BJ (cell line): ENCODE measurements at regions of chr16 and their contacts with region 1.

Region 1: GRCh38 chr16:3938848-3939624 is 58.5 kb upstream of the CREBBP start:
- DNase-seq: peak; percentile 67
- H3K4me3 ChIP-seq: peak overlapping the region; percentile 35
- H3K27me3 ChIP-seq: no peaks in the 10 kb centered on the region
- CTCF ChIP-seq: peak; percentile 97

Region 2: DNA sequence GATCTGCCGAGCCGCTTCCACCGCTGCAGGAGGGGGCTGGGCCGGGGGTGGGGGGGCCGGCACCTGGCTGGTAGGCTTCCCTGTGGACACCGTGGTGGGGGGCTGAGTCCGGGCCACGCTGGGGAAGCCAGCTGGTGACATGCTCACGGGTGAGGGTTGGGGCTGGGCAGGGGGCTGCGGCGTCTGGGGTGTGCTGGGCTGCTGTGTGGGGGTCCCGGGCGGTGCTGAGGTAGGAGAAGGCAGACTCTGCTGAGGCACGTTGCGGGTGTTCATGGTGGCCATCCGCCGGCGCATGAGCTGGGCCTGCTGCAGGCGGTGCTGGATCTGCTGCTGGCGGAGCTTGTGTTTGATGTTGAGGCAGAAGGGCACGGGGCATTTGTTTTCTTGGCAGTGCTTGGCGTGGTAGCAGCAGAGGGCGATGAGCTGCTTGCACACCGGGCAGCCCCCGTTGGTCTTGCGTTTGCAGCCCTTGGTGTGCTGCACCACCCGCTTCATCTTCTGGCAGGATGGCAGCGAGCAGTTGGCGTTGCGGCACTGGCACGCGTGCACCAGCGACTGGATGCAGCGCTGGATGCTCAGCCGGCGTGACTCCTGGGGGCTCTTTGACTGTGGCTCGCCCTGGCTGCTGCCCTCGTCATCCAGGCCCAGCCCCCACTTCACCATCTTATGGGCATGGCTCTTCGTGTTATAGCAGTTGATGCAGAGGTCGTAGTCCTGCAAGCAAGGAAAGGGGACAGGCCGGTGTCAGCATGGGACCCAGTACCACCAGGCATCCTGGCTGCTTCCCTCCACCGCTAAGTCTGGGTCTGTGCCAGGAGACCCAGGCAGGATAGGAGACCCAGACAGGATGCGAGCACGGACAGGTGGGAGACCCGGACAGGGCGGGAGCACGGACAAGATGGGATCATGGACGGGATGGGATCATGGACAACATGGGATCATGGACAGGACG is 209.6 kb before region 1 on chr16:
- CTCF ChIA-PET with region 1: interaction called, 4 read pairs
- POLR2A ChIA-PET with region 1: interaction called, 10 read pairs
- DNase-seq: no peak
- H3K4me3 ChIP-seq: no peak overlapping the region
- H3K27me3 ChIP-seq: no peaks in the 10 kb centered on the region
- CTCF ChIP-seq: no peak

Region 3: DNA sequence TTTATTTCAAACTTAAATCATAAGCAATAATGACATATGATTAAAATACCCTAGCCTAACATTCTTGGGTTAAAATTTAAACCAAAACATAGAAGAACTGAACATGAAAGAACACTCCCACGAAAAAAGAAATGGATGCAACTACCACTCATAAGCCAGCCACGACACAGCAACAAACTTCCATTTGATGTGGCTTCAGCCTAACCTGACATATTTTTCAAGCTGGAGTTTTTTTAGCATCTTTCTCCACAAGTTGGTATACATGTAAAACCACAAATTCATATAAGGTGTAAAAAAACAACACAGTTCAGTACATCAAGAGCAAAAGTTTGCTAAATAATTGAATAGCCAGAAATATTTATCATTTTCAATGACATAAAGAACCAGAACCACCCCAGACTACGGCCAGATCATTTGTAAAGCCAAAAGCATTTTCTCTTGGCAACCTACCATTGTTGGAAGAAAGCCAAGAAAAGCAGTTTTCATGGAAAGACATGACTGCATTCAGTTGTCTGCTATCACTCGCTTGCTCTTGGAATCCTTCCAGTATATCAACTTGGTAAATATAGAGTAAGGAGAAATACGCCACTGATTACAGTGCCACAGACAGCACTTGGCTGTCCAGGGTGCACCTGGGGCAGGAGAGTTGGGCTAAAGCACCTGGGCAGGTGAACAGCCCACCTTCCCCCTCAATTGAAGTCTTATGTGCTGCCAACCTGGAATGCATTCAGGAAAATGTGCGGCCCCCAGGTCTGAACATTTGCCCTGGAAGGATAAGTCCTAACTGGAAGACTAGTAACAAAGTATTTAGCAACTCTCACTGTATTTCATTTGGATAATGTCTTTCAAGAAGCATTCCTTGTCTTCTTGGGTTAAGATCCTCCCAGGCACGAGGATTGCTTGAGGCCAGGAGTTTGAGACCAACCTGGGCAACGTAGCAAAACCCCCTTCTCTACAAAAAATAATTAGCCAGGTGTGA is 119.0 kb before region 1 on chr16:
- CTCF ChIA-PET with region 1: no interaction called
- POLR2A ChIA-PET with region 1: no interaction called
- DNase-seq: peak; percentile 52
- H3K4me3 ChIP-seq: no peak overlapping the region
- H3K27me3 ChIP-seq: no peaks in the 10 kb centered on the region
- CTCF ChIP-seq: no peak

Region 4: DNA sequence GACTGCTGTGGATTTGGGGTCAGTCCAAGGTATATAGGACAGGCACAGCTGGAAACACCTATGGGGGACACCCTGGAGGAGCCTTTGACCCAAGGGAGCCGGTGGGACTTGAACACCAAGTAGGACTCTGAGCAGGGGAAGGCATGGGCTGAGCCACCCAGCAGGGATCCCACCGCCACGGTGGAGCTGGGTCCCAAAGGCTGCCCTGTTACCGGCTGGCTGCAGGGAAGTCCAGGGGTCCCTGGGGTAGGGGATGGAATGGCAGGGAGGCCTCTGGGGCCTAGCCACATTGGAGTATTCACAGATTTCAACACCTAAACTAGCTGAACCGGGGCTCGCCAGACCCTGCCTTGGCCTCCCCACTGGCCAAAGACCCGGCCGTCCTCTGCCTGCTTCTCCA is 18.8 kb before region 1 on chr16:
- CTCF ChIA-PET with region 1: interaction called, 24 read pairs
- POLR2A ChIA-PET with region 1: no interaction called
- DNase-seq: no peak
- H3K4me3 ChIP-seq: no peak overlapping the region
- H3K27me3 ChIP-seq: peaks cover 2% of the 10 kb centered on the region; the same call in 1 of the 2 replicates
- CTCF ChIP-seq: no peak

Region 5: DNA sequence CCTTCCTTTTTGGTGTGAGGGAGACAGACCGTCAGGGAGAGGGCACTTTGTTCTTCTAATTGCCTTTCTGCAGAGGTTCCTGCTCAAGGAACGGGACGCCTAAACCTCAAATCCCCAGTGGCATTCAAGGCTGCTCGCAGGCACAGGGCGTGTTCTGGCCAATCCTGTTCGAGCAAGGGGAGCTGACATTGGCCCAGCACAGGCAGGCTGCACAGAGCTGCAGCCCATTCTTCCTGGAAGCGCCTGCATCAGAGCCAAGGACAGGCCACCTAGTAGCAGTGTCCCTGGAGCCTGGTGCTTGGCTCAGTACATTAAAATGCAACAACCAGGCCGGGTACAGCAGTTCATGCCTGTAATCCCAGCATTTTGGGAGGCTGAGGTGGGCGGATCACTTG is 13.7 kb after region 1 on chr16:
- CTCF ChIA-PET with region 1: interaction called, 14 read pairs
- POLR2A ChIA-PET with region 1: no interaction called
- DNase-seq: no peak
- H3K4me3 ChIP-seq: no peak overlapping the region
- H3K27me3 ChIP-seq: no peaks in the 10 kb centered on the region
- CTCF ChIP-seq: no peak

Region 6: GRCh38 chr16:3983081-3983520 is 44.1 kb after region 1 on chr16:
- CTCF ChIA-PET with region 1: interaction called, 12 read pairs
- POLR2A ChIA-PET with region 1: no interaction called
- DNase-seq: no peak
- H3K4me3 ChIP-seq: no peak overlapping the region
- H3K27me3 ChIP-seq: no peaks in the 10 kb centered on the region
- CTCF ChIP-seq: peak; percentile 84